Thyroid gland (tissue), 4 donors: ENCODE measurements at regions of chr2 and their contacts with region 1.

Region 1: DNA sequence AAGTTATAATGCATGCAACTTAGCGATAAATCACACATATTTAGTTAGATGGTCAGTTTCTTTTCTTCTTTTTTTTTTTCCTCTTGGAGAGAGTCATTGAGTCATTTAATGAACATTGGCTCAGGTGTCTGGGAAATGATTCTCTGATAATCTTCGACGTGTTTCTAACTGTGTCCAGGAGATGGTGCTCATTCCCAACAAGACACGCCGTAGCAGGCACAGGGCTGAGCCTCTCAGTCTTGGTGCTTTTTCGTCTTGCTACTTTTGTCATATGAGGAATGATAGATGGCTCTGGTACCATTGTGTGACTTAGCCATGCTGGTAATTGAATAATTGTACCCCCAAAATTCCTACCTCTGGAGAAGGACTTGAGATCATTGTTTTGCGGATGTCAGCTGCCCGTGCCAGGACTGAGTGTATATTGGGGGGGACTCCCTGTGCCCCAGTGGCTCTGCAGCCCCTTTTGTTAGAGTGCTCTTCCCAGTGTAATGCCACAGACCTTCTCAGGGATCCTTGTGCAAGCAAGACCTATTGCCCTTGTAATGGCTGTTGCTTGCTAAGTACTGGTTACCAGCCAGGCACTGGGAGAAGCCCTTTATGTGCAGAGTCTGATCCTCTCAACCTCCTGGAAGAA is 107.6 kb upstream of the CYRIA start:
- DNase-seq: peak; percentile 43 to 54
- H3K4me3 ChIP-seq: no peak overlapping the region
- H3K27ac ChIP-seq: no peak overlapping the region
- H3K4me1 ChIP-seq: peaks cover 12 to 23% of the 10 kb centered on the region in 2 donors
- H3K27me3 ChIP-seq: no peaks in the 10 kb centered on the region
- CTCF ChIP-seq: peak in 5 of 6 experiments; percentile 24 to 87 (median 57)
- POLR2A ChIP-seq: no peak

Region 2: DNA sequence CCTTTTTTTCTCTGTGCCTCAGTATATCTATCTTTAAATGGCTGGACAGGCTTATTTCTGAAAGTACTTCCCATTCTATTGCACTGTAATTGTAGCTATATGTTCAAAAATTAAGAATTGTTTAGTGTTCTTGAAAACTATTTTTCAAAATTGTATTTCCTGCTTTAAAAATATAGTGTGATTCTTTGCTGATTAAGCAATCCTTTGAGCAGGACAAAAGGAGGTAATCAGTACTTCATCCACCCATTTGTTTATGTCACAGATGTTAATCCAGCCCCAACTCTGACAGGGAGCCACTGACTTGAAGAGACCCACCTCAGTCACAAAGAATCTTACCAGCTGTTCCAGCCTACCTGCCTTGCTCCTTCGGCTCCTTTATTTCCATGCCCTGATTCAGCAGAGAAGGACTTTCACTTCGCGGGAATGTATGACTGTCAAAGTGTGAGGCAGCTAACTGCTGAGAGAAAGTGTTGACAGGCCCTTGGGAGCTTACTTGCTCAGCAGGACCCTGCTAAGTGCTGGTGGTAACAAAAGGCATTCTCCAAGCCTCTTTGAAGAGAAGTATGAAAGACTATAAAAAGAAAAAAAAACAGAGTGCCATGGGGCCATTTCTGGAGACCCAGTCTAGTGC is 285.7 kb after region 1 on chr2:
- intact Hi-C with region 1: no loop called
- DNase-seq: no peak
- H3K4me3 ChIP-seq: no peak overlapping the region
- H3K27ac ChIP-seq: no peak overlapping the region
- H3K4me1 ChIP-seq: no peaks in the 10 kb centered on the region
- H3K27me3 ChIP-seq: no peaks in the 10 kb centered on the region
- CTCF ChIP-seq: no peak
- POLR2A ChIP-seq: no peak

Region 3: DNA sequence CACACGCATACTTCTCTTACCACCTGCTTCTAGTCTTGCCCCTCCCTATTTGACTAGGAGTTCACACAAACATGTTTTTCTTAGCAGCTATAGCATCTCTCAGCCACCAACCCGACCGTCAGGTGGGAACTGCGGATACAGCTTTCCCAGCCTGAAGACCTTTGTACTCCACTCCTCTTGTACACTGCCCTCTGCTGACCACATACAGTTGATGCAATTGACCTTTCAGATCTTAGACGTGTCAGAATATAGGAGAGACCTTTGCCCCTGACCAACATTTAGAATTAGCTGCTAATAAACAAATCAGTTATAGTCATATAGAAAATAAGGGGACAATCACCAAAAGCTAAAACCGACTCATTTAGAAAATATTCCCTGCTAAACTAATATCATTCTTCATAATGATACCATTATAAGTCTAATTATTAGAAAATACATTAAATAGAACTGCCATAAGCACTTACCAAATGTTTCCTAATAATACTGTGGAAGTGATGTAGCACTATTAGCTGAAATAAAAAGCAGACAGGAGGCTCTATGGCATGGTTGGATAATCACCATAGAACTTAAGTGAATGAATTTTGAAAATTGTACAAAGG is 536.6 kb after region 1 on chr2:
- intact Hi-C with region 1: loop called (anchors 5 kb)
- DNase-seq: peak; percentile 41 to 54
- H3K4me3 ChIP-seq: no peak overlapping the region
- H3K27ac ChIP-seq: no peak overlapping the region
- H3K4me1 ChIP-seq: no peaks in the 10 kb centered on the region
- H3K27me3 ChIP-seq: no peaks in the 10 kb centered on the region
- CTCF ChIP-seq: peak; percentile 16 to 77 (median 56)
- POLR2A ChIP-seq: no peak

Region 4: GRCh38 chr2:17594533-17595401 is 821.6 kb after region 1 on chr2:
- intact Hi-C with region 1: no loop called
- DNase-seq: no peak
- H3K4me3 ChIP-seq: no peak overlapping the region
- H3K27ac ChIP-seq: no peak overlapping the region
- H3K4me1 ChIP-seq: no peaks in the 10 kb centered on the region
- H3K27me3 ChIP-seq: no peaks in the 10 kb centered on the region
- CTCF ChIP-seq: no peak
- POLR2A ChIP-seq: no peak

Region 5: GRCh38 chr2:17667898-17668297 is 894.7 kb after region 1 on chr2:
- intact Hi-C with region 1: loop called (anchors 10 kb)
- DNase-seq: no peak
- H3K4me3 ChIP-seq: no peak overlapping the region
- H3K27ac ChIP-seq: no peak overlapping the region
- H3K4me1 ChIP-seq: no peaks in the 10 kb centered on the region
- H3K27me3 ChIP-seq: no peaks in the 10 kb centered on the region
- CTCF ChIP-seq: no peak
- POLR2A ChIP-seq: no peak